Activated CD4-positive, alpha-beta T cell treated with anti-CD3 and anti-CD28 coated beads, Interleukin-2, amount 10 ng/mL, durations not matched to agents 24 days and 14 days (primary cell): ENCODE measurements at regions of chr1 and their contacts with region 1.

Region 1: GRCh38 chr1:235002706-235003300 is 125.8 kb downstream of the TOMM20 start:
- DNase-seq: no peak
- H3K4me3 Mint-ChIP-seq: no peak overlapping the region
- H3K27ac Mint-ChIP-seq: peak overlapping the region; percentile 63
- H3K4me1 Mint-ChIP-seq: peaks cover 45% of the 10 kb centered on the region
- H3K27me3 Mint-ChIP-seq: no peaks in the 10 kb centered on the region

Region 2: DNA sequence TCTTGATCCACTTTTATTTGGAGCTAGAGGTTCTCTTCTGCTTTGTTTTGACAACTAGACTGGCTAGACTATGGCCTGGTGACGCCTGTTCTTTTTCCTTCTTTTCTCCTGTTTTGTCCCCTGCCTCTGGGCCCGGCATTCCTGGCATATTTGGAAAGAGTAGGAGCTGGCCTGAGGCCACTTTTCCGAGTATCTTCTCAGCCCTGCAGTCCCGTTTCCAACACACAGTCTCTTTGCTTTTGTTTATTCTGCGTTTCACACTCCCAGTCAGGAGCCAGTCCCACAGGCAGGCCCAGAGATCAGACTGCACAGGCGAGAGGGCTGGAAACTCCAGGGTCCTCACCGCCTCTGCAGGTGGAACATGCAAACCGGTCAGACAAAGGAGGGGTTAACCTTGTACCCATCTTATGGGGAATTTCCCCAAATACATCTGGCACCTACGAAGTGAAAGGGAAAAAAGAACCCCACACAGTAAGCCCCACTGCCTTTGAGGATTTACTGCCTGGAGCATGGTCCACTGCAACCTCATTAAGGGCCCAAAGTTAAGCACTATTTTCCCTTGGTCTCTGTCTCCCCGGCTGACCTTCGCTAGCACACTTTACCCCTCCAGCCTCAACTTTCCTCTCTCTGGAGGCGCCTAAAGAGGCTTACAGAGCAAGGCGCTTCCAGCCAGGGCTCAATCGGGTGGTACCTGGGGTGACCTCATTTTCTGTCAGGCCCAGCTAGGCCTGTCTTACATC is 15.2 kb before region 1 on chr1:
- intact Hi-C with region 1: loop called (anchors 1 kb)
- DNase-seq: peak; percentile 73
- H3K4me3 Mint-ChIP-seq: peak overlapping the region; percentile 66
- H3K27ac Mint-ChIP-seq: peak overlapping the region; percentile 98
- H3K4me1 Mint-ChIP-seq: peaks cover 71% of the 10 kb centered on the region
- H3K27me3 Mint-ChIP-seq: no peaks in the 10 kb centered on the region